ENCODE measurements at regions of chr1 and their contacts with region 1.

Region 1: DNA sequence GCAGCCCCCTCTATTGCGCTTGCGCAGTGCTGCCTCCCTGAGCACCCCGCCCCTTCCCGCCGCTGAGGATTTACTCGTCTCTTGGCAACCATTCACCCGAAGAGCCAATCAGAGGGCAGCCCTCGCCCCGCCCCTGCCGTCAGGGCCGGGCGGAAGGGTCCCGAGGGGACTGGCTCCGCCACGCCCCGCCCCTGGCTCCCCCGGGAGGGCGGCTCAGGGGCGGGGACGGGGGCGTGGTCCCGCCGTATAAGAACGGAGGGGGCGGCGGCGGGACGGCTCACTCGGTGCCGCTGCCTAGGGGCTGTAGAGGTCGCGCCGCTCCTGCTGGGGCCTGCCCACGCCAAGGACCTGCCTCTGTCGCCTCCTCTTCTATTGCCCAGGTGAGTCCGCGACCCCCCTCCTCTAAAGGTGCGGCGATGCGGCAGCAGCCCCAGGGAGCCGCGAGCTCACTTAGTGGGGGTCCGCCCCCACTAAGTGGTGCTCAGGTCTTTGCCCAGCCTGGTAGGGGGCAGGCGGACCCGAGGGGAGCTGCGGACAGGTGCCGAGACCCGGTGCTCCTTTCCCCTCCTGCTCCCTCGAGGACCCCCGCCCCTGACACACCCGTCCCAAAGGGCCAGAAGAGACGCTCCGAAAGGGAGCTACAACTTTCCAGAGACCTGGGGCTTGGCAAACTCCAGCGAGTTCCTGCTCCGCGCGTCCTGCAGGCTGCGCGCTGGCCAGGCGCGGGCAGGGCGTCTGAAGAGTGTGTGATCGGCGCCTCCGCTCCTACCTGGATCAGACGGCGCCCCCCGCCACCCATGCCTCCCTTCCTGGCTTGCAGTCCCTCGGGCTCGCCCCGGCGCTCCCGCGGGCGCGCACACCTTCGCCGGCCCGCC is at the start of gene TENT5C:
- DNase-seq: peak; percentile 54
- ATAC-seq: peak; percentile 92
- H3K4me3 ChIP-seq: peak within 1 kb of the TSS; percentile 62
- H3K27ac ChIP-seq: no peak within 1 kb of the TSS
- H3K4me1 ChIP-seq: peaks cover 11% of the 10 kb centered on the region
- H3K27me3 ChIP-seq: peaks cover 7 to 11% of the 10 kb centered on the region in 2 experiments; a peak in 2 of 4 replicates
- CTCF ChIP-seq: no peak
- EP300 ChIP-seq: no peak
- POLR2A ChIP-seq: peak; percentile 95
- RAD21 ChIP-seq: no peak
- polyA plus RNA-seq, gene TENT5C: 0.31 to 0.53 TPM

Region 2: GRCh38 chr1:117501281-117501680 is 104.7 kb before region 1 on chr1:
- CTCF ChIA-PET with region 1: no interaction called
- POLR2A ChIA-PET with region 1: no interaction called
- RAD21 ChIA-PET with region 1: no interaction called
- SMC1A ChIA-PET with region 1: no interaction called
- in situ Hi-C with region 1: no loop called
- intact Hi-C with region 1: no loop called
- DNase-seq: no peak
- ATAC-seq: no peak
- H3K4me3 ChIP-seq: no peak overlapping the region
- H3K27ac ChIP-seq: no peak overlapping the region
- H3K4me1 ChIP-seq: no peaks in the 10 kb centered on the region
- H3K27me3 ChIP-seq: no peaks in the 10 kb centered on the region
- CTCF ChIP-seq: no peak
- EP300 ChIP-seq: no peak
- POLR2A ChIP-seq: no peak
- RAD21 ChIP-seq: no peak

Region 3: GRCh38 chr1:117654493-117655219 is 48.6 kb after region 1 on chr1:
- CTCF ChIA-PET with region 1: interaction called, 3 read pairs
- POLR2A ChIA-PET with region 1: no interaction called
- RAD21 ChIA-PET with region 1: no interaction called
- SMC1A ChIA-PET with region 1: no interaction called
- in situ Hi-C with region 1: no loop called
- intact Hi-C with region 1: loop called (anchors 2 kb)
- DNase-seq: peak; percentile 89
- ATAC-seq: peak; percentile 84
- H3K4me3 ChIP-seq: peak overlapping the region; percentile 35; the same call in 1 of the 2 replicates
- H3K27ac ChIP-seq: peak overlapping the region; percentile 76
- H3K4me1 ChIP-seq: peaks cover 63% of the 10 kb centered on the region
- H3K27me3 ChIP-seq: peaks cover 0 to 3% of the 10 kb centered on the region in 2 experiments; a peak in 2 of 4 replicates
- CTCF ChIP-seq: no peak
- EP300 ChIP-seq: peak; percentile 85 to 98; a peak in 3 of 4 replicates
- POLR2A ChIP-seq: no peak
- RAD21 ChIP-seq: no peak

Region 4: GRCh38 chr1:117664314-117664713 is 58.3 kb after region 1 on chr1:
- CTCF ChIA-PET with region 1: no interaction called
- POLR2A ChIA-PET with region 1: no interaction called
- RAD21 ChIA-PET with region 1: no interaction called
- SMC1A ChIA-PET with region 1: no interaction called
- in situ Hi-C with region 1: no loop called
- intact Hi-C with region 1: loop called (anchors 2 kb)
- DNase-seq: peak; percentile 92
- ATAC-seq: peak; percentile 95
- H3K4me3 ChIP-seq: no peak overlapping the region
- H3K27ac ChIP-seq: peak overlapping the region; percentile 42
- H3K4me1 ChIP-seq: peaks cover 39% of the 10 kb centered on the region
- H3K27me3 ChIP-seq: peaks cover under 1% of the 10 kb centered on the region in 2 experiments; a peak in 2 of 4 replicates
- CTCF ChIP-seq: no peak
- EP300 ChIP-seq: peak; percentile 99
- POLR2A ChIP-seq: no peak
- RAD21 ChIP-seq: no peak